ENCODE measurements at regions of chr3 and their contacts with region 1.

Region 1: GRCh38 chr3:186570096-186570940 is at the start of gene DNAJB11:
- DNase-seq: peak; percentile 100
- H3K4me3 ChIP-seq: peak within 1 kb of the TSS; percentile 80 to 91 (median 90)
- H3K27ac ChIP-seq: peak within 1 kb of the TSS; percentile 67
- H3K4me1 ChIP-seq: peaks cover 18% of the 10 kb centered on the region
- H3K27me3 ChIP-seq: no peaks in the 10 kb centered on the region
- CTCF ChIP-seq: no peak
- POLR2A ChIP-seq: peak; percentile 87
- total RNA-seq, gene DNAJB11: 87.6 and 100 TPM in 2 replicates

Region 2: DNA sequence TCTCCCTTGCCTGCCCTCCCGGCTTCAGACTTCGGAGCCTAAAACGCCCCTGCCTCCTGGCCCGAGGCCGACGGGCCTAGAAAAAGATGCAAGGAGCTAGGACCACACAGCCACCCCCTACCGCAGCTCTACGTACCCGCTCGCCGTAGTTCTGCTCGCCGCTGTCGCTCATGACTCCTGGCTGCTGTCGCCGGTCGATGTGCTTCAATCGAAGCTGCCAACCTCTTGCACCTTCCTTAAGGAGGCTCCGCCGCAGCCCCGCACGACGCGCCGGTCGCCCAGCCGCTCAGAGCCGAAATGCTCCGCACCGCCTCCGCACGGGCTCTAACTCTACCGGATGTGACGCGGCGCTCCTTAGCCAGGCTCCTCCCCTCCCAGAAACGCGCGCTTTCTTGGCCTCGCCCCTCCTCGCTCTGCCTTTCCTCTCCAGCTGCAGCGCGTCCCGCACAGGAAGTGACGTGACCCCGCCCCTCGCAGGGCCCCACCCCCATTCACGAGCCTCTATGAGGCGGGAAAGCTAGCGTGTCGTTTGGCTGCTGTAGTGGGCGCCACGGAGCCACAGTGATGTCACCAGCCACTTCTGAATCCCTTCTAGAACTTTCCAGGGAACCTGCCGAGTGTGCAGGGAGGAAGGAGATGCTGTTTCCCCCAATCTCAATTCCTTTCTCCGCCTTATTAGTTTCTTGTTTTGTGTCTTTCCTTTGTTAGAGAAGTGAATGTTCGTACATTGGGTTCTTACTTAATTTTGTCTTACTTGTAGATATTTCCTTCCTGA is 632.4 kb before region 1 on chr3 and contains the start of gene TRA2B:
- CTCF ChIA-PET with region 1: no interaction called
- POLR2A ChIA-PET with region 1: interaction called, 7 read pairs
- dilution Hi-C with region 1: no loop called
- intact Hi-C with region 1: loop called (anchors 1 kb)
- DNase-seq: peak; percentile 99
- H3K4me3 ChIP-seq: peak within 1 kb of the TSS; percentile 41 to 98 (median 97)
- H3K27ac ChIP-seq: peak within 1 kb of the TSS; percentile 76
- H3K4me1 ChIP-seq: peaks cover 26% of the 10 kb centered on the region
- H3K27me3 ChIP-seq: peaks cover 0 to 3% of the 10 kb centered on the region in 2 experiments
- CTCF ChIP-seq: peak in 1 of 2 donors; percentile 38
- POLR2A ChIP-seq: peak; percentile 99
- total RNA-seq, gene TRA2B: 199 and 214 TPM in 2 replicates

Region 3: DNA sequence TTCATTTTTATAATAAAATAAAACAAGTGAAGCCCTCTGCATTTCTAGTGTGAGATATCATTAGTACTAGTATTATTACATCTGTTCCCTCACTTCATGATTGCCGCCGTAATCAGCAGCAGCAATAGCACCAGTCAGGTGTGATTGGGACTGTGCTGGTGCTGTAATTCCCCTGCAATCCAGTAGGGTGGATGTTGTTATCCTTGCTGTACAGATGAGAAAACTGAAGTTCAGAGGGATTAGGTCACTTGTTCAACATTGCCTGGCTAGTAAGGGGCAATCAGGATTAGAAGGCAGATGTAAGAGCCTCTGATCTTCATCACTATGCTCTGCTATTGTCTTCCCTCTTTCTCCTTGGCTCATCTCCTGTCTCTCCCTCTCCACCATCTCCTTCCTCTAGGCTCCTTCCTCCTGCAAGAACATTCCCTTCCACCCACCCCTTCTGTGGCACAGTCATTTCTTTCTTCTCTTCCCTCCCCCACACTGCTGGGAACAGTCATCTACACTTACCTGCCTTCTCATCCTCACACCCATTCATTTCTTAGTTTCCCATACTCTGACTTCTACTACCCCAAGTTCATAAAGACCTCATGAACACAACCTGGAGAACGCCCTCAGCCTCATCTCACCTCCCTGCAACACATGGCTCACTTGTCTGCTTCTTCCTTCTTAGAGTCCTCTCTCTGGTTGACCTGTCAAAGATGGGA is 55.9 kb before region 1 on chr3:
- CTCF ChIA-PET with region 1: no interaction called
- POLR2A ChIA-PET with region 1: no interaction called
- dilution Hi-C with region 1: no loop called
- intact Hi-C with region 1: no loop called
- DNase-seq: no peak
- H3K4me3 ChIP-seq: no peak overlapping the region
- H3K27ac ChIP-seq: no peak overlapping the region
- H3K4me1 ChIP-seq: no peaks in the 10 kb centered on the region
- H3K27me3 ChIP-seq: peaks cover 0 to 2% of the 10 kb centered on the region in 2 experiments
- CTCF ChIP-seq: peak in 1 of 2 donors; percentile 29
- POLR2A ChIP-seq: no peak

Region 4: GRCh38 chr3:186746008-186746407 is 175.7 kb after region 1 on chr3:
- CTCF ChIA-PET with region 1: no interaction called
- POLR2A ChIA-PET with region 1: no interaction called
- dilution Hi-C with region 1: no loop called
- intact Hi-C with region 1: loop called (anchors 5 kb)
- DNase-seq: peak; percentile 53
- H3K4me3 ChIP-seq: no peak overlapping the region
- H3K27ac ChIP-seq: peak overlapping the region; percentile 53
- H3K4me1 ChIP-seq: peaks cover 6% of the 10 kb centered on the region
- H3K27me3 ChIP-seq: peaks cover 2% of the 10 kb centered on the region in 2 experiments
- CTCF ChIP-seq: no peak
- POLR2A ChIP-seq: no peak

Region 5: DNA sequence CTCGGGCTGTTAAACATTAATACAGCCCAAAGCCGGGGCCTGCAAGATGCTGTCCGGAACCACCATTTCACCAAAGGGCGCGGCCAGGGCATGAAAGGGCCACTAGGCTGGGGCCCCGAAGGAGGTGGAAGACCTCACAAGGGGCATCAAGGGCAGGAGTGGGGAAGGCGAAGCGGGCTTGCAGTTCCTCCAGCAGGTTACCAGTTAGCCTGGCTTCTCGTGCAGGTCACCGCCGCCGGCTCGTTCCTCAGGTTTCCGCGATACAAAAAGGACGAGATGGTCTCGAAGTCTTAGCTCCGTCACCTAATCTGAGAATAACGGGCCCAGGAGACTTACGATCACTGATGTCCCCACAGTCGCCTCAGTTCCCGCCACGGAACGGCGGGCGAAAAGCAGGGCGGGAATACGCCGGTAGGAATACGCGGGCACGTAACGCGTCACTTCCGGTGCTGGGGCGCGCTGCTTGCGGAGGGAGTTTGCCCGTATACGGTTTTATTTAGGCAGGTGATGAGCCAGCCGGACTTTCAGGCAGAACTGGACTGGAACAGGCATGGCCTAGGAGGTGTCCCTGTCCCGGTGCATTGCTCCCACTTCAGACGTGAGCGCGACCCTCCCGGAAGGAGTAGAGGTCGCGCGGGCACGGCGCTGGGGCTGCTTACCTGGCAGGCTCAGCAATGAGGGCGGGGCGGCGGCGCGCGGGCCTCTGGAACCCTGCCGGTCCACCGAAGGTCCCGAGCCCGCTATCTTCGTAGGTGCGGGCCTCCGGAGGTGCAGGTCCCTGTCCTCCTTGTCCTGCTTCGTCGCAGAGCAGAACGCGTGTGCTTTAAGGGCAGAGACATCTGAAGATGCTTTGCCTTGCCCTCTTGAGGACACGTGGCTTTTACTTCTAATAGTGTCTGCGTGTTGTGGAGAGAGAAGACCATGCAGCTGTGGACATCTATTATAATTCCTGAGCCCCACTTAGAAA is 236.1 kb after region 1 on chr3 and contains the start of gene RFC4:
- CTCF ChIA-PET with region 1: no interaction called
- POLR2A ChIA-PET with region 1: no interaction called
- dilution Hi-C with region 1: no loop called
- intact Hi-C with region 1: loop called (anchors 5 kb)
- DNase-seq: peak; percentile 75
- H3K4me3 ChIP-seq: peak within 1 kb of the TSS; percentile 29 to 85 (median 63)
- H3K27ac ChIP-seq: peak within 1 kb of the TSS; percentile 42
- H3K4me1 ChIP-seq: peaks cover 12% of the 10 kb centered on the region
- H3K27me3 ChIP-seq: no peaks in the 10 kb centered on the region
- CTCF ChIP-seq: no peak
- POLR2A ChIP-seq: peak; percentile 85
- total RNA-seq, gene RFC4: 29.1 and 33.7 TPM in 2 replicates

Region 6: DNA sequence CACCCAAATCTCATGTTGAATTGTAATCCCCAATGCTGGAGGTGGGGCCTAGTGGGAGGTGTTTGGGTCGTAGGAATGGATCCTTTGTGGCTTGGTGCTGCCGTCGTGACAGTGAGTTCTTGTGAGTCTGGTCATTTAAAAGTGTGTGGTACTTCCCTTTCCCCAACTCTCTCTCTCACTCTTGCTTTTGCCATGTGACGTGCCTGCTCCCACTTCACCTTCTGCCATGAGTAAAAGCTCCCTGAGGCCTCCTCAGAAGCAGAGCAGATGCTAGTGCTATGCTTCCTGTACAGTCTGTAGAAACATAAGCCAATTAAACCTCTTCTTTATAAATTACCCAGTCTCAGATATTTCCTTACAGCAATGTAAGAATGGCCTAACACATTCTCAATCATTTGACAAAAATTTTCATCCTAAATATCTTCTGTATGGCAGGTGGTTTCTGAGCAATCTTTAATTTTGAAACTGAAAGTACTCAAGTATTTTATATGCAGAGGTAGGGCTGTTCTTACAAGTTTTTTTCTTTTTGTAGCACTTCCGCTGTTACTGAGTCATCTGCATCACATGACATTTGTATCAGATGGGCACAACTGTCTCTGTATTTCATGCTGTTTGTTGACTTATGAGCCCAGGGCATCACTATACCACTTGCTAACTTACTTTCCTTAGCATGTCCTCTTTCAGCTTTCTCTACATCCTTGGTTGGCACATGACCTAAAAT is 560.2 kb after region 1 on chr3:
- CTCF ChIA-PET with region 1: no interaction called
- POLR2A ChIA-PET with region 1: no interaction called
- dilution Hi-C with region 1: no loop called
- intact Hi-C with region 1: no loop called
- DNase-seq: peak; percentile 83
- H3K4me3 ChIP-seq: peak overlapping the region in 1 of 3 experiments; percentile 41
- H3K27ac ChIP-seq: peak overlapping the region; percentile 40
- H3K4me1 ChIP-seq: peaks cover 11% of the 10 kb centered on the region
- H3K27me3 ChIP-seq: no peaks in the 10 kb centered on the region
- CTCF ChIP-seq: no peak
- POLR2A ChIP-seq: no peak